BJ (cell line): ENCODE measurements at regions of chr11 and their contacts with region 1.

Region 1: GRCh38 chr11:126607374-126607773 is 251.9 kb downstream of the ST3GAL4 start:
- DNase-seq: no peak
- H3K4me3 ChIP-seq: no peak overlapping the region
- H3K27me3 ChIP-seq: no peaks in the 10 kb centered on the region
- CTCF ChIP-seq: peak; percentile 94

Region 2: DNA sequence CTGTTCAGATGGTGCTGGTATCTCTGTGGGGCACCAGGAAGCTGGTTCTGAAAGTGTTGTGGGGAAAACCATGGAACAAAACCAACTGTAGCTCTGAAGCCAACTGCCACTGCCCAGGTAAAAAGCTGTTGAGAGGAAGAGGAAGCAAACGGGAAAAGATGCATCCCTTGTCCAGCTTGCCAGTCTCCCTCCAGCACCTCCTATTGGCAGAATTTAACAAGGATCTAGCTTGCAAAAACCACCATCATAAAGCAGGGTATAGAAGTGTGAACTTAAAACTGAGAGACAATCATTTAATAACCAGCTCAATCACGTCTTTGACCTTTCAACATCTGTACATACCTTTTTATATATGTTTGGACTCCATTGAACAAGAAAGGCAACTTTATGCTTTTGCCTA is 856.7 kb before region 1 on chr11:
- CTCF ChIA-PET with region 1: no interaction called
- POLR2A ChIA-PET with region 1: no interaction called
- DNase-seq: no peak
- H3K4me3 ChIP-seq: no peak overlapping the region
- H3K27me3 ChIP-seq: peaks cover under 1% of the 10 kb centered on the region; the same call in 1 of the 2 replicates
- CTCF ChIP-seq: no peak

Region 3: GRCh38 chr11:126510621-126511370 is 96.6 kb before region 1 on chr11:
- CTCF ChIA-PET with region 1: no interaction called
- POLR2A ChIA-PET with region 1: no interaction called
- DNase-seq: no peak
- H3K4me3 ChIP-seq: no peak overlapping the region
- H3K27me3 ChIP-seq: no peaks in the 10 kb centered on the region
- CTCF ChIP-seq: no peak

Region 4: GRCh38 chr11:126560221-126560620 is 47.2 kb before region 1 on chr11:
- CTCF ChIA-PET with region 1: no interaction called
- POLR2A ChIA-PET with region 1: no interaction called
- DNase-seq: no peak
- H3K4me3 ChIP-seq: no peak overlapping the region
- H3K27me3 ChIP-seq: no peaks in the 10 kb centered on the region
- CTCF ChIP-seq: no peak

Region 5: GRCh38 chr11:126592496-126593410 is 14.6 kb before region 1 on chr11:
- CTCF ChIA-PET with region 1: interaction called, 10 read pairs
- POLR2A ChIA-PET with region 1: no interaction called
- DNase-seq: no peak
- H3K4me3 ChIP-seq: no peak overlapping the region
- H3K27me3 ChIP-seq: no peaks in the 10 kb centered on the region
- CTCF ChIP-seq: no peak

Region 6: DNA sequence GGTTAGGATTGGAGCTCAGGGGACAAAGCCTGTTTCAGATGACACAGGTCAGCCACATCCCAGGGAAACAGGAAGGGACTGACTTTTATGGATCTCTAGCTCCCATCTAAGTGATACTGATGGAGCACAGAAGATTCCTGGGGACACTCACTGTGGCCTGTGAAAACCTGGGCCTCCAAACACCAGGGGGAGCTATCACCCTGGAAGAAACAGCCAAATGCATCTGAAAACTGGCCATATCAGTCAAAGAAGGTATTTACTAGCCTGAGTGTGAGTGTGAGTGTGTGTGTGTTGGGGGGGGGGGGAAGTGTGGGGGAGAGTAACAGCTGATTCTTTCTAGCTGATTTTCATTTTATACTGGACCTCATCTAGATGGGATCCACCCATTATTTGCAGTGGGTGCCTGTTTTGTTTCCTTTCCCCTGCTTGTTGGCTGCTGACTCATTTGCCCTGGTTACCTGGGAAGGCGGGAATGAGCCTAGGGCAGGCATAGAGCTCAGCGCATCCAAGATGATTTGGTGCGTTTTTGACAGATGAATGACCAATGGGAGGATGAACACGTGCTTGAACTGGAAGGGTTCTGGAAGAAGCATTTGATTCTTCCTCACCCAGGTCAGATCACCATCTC is 109.2 kb after region 1 on chr11:
- CTCF ChIA-PET with region 1: interaction called, 10 read pairs
- POLR2A ChIA-PET with region 1: no interaction called
- DNase-seq: no peak
- H3K4me3 ChIP-seq: no peak overlapping the region
- H3K27me3 ChIP-seq: no peaks in the 10 kb centered on the region
- CTCF ChIP-seq: peak; percentile 69

Region 7: GRCh38 chr11:126817096-126817495 is 209.7 kb after region 1 on chr11:
- CTCF ChIA-PET with region 1: interaction called, 10 read pairs
- POLR2A ChIA-PET with region 1: no interaction called
- DNase-seq: no peak
- H3K4me3 ChIP-seq: no peak overlapping the region
- H3K27me3 ChIP-seq: no peaks in the 10 kb centered on the region
- CTCF ChIP-seq: no peak

Region 8: GRCh38 chr11:126969865-126970479 is 362.6 kb after region 1 on chr11:
- CTCF ChIA-PET with region 1: interaction called, 22 read pairs
- POLR2A ChIA-PET with region 1: no interaction called
- DNase-seq: no peak
- H3K4me3 ChIP-seq: no peak overlapping the region
- H3K27me3 ChIP-seq: no peaks in the 10 kb centered on the region
- CTCF ChIP-seq: peak; percentile 85

Region 9: DNA sequence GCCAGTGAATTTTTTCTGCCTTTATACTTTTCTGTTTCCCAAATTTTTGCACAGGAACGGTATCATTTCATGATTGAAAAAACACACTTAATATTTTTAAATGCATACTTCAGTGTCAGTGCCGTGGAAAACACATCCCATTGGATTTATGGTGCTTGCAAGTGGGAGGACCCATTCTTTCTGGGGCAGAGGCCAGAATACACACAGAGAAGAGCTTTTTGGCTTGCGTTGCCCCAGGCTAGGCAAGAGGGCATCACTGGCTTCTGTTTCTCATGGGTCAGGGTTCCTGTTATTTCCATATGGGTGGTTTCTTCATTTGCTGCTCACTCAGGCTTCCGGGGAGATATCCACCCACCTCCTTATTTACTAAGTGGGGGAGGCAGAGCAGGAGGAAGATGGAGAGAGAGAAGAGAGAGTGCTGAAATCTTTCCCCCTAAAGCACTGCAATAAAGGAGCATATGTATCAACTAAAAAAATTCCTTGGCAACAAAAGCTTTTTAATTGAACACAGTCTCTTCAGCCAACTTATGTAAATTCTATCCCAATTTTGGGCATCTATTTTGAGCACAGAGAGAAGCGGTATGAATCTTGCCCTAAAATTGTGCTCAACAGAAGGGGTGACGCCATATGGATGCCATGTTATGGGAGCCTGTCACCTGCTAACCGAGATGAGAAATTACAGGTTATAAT is 459.2 kb after region 1 on chr11:
- CTCF ChIA-PET with region 1: no interaction called
- POLR2A ChIA-PET with region 1: no interaction called
- DNase-seq: no peak
- H3K4me3 ChIP-seq: no peak overlapping the region
- H3K27me3 ChIP-seq: peaks cover 14% of the 10 kb centered on the region
- CTCF ChIP-seq: no peak

Region 10: GRCh38 chr11:127345819-127346459 is 738.6 kb after region 1 on chr11:
- CTCF ChIA-PET with region 1: interaction called, 13 read pairs
- POLR2A ChIA-PET with region 1: no interaction called
- DNase-seq: no peak
- H3K4me3 ChIP-seq: no peak overlapping the region
- H3K27me3 ChIP-seq: no peaks in the 10 kb centered on the region
- CTCF ChIP-seq: peak; percentile 87